A673 (cell line): ENCODE measurements at regions of chr17 and their contacts with region 1.

Region 1: GRCh38 chr17:7444682-7445618 is at the start of gene CHRNB1:
- DNase-seq: peak; percentile 68
- H3K4me3 ChIP-seq: peak within 1 kb of the TSS; percentile 45
- H3K27ac ChIP-seq: peak within 1 kb of the TSS; percentile 73
- H3K4me1 ChIP-seq: peaks cover 29% of the 10 kb centered on the region
- H3K27me3 ChIP-seq: no peaks in the 10 kb centered on the region
- CTCF ChIP-seq: no peak
- total RNA-seq, gene CHRNB1: 5.2 and 8.6 TPM in 2 replicates

Region 2: DNA sequence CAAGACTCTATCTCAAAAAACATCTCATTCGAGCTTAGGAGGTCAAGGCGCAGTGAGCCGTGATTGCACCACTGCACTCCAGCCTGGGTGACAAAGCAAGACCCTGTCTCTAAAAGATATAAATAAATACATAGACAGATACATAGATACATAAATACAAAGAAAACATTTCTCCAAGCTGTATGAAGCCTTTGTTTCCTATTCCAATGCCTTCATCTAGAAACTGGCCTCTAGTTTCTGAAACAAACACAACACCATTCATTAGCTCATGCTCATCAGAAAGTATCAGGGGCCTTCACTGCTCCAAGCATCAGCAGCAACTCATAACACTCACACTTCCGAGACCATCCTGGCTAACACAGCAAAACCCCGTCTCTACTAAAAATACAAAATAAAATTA is 320.0 kb before region 1 on chr17:
- CTCF ChIA-PET with region 1: interaction called, 11 read pairs
- POLR2A ChIA-PET with region 1: no interaction called
- intact Hi-C with region 1: no loop called
- DNase-seq: no peak
- H3K4me3 ChIP-seq: no peak overlapping the region
- H3K27ac ChIP-seq: no peak overlapping the region
- H3K4me1 ChIP-seq: no peaks in the 10 kb centered on the region
- H3K27me3 ChIP-seq: no peaks in the 10 kb centered on the region
- CTCF ChIP-seq: no peak

Region 3: DNA sequence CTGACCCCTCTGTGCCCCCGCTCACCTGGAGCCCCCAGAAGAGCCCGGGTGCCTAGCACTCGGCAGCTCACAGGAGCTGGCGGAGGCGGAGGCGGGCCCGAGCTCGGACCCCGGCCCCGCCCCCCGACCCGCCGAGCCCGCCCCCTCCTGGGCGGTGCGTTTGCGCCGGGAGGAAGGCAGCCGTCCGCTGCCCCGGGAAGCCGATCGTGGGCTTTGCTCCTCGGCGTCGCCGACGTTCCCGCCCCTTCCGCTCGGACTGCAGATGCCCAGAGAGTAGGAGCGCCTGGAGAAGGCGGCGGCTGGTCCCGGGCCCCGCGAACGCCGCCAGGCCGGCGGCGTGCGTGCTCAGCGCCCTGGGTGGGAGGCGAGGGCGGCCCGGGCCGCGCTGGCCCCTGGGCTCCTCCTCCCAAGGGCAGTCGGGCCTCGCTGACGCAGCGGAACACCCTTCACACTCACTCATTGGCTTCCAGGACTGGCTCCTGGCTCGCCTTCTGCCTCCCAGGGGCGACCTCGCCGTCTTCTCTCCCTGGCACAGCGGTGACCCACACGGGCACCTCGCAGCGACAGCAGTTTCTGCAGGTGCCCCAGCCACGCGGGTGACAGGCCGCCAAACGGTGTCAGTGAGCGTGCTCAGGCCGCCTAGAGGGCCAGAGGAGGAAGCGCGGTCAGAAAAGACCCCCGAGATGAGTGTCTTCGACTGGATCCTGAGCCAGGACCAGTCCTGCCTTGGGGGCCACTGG is 50.3 kb before region 1 on chr17 and contains the start of gene PLSCR3:
- CTCF ChIA-PET with region 1: no interaction called
- POLR2A ChIA-PET with region 1: no interaction called
- intact Hi-C with region 1: no loop called
- DNase-seq: peak; percentile 87
- H3K4me3 ChIP-seq: peak within 1 kb of the TSS; percentile 94
- H3K27ac ChIP-seq: peak within 1 kb of the TSS; percentile 80
- H3K4me1 ChIP-seq: peaks cover 13% of the 10 kb centered on the region
- H3K27me3 ChIP-seq: no peaks in the 10 kb centered on the region
- CTCF ChIP-seq: peak; percentile 50
- total RNA-seq, gene PLSCR3: 15.2 and 29.3 TPM in 2 replicates

Region 4: DNA sequence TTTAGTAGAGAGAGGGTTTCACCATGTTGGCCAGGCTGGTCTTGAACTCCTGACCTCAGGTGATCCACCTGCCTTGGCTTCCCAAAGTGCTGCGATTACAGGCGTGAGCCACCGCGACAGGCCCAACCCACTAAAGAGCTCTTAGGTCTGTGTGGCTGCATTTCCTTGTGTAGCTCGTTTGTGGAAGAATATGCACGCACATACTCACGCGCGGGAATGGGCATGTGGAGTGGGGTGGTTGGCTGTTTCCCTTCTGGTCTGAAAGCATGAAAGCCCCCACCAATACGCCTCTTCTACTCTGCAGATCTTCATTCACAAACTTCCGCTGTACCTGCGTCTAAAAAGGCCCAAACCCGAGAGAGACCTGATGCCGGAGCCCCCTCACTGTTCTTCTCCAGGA is 10.0 kb after region 1 on chr17:
- CTCF ChIA-PET with region 1: no interaction called
- POLR2A ChIA-PET with region 1: interaction called, 13 read pairs
- intact Hi-C with region 1: no loop called
- DNase-seq: no peak
- H3K4me3 ChIP-seq: peak overlapping the region; percentile 54
- H3K27ac ChIP-seq: no peak overlapping the region
- H3K4me1 ChIP-seq: no peaks in the 10 kb centered on the region
- H3K27me3 ChIP-seq: no peaks in the 10 kb centered on the region
- CTCF ChIP-seq: no peak